Activated B cell treated with CpG ODN at 0.5 μM for 24 hours (primary cell): ENCODE measurements at regions of chrX and their contacts with region 1.

Region 1: DNA sequence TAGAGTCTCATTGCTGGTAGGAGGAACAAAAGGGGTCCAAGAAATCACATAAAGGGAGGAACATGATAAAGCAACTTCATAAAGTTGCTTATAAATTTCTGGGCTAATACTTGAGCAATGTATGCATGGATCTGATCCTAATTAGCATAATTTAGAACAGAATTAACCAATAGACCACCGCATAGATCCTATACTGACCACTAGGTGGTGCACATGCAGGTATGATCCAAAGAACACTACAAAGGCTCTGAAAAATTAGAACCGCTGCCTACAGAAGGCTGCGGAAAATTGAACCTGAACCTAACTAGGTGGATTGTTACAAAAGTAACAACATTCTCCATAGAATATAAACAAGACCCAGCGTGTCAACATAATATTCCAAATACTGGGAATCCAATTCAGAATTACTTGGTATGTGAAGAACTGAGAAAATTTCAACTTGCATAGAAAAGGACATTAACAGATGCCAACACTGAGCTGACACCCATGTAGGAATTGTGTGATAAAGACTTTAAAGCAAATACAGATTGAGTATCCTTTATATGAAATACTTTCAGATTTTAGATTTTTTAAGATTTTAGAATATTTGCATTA is 23.3 kb downstream of the BRCC3 start:
- DNase-seq: no peak
- ATAC-seq: peak; percentile 56
- H3K4me3 Mint-ChIP-seq: no peak overlapping the region
- H3K27ac Mint-ChIP-seq: no peak overlapping the region
- H3K4me1 Mint-ChIP-seq: no peaks in the 10 kb centered on the region
- H3K27me3 Mint-ChIP-seq: no peaks in the 10 kb centered on the region
- CTCF ChIP-seq: no peak

Region 2: DNA sequence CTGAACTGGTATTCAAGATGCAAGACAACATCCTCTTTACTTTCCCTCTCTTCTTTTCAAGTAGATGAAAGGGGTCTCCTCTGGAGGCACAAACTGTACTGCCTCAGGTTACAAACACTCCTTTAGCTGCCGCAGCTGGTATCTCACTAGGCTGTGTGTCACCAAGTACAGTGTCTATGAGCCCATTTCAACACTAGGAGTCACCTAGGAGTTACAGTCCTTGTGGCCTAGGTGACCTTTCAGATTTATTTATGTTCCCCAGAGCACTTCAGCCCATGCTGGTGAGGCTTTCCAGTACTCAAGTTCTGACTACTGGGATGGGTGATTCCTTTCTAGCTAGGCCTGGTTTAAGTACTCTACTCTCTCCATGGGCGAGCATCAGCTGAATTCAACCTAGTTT is 550.6 kb after region 1 on chrX:
- CTCF ChIA-PET with region 1: no interaction called
- POLR2A ChIA-PET with region 1: no interaction called
- intact Hi-C with region 1: loop called (anchors 2 kb)
- DNase-seq: no peak
- ATAC-seq: no peak
- H3K4me3 Mint-ChIP-seq: no peak overlapping the region
- H3K27ac Mint-ChIP-seq: no peak overlapping the region
- H3K4me1 Mint-ChIP-seq: no peaks in the 10 kb centered on the region
- H3K27me3 Mint-ChIP-seq: peaks cover 3% of the 10 kb centered on the region
- CTCF ChIP-seq: no peak